ENCODE measurements at regions of chr2 and their contacts with region 1.

Region 1: GRCh38 chr2:205925373-205926337 is 160.3 kb downstream of the INO80D start:
- DNase-seq: peak; percentile 53 to 80
- ATAC-seq: peak; percentile 72 to 91 (median 80)
- H3K4me3 ChIP-seq: no peak overlapping the region
- H3K4me3 Mint-ChIP-seq: no peak overlapping the region
- H3K27ac ChIP-seq: no peak overlapping the region
- H3K27ac Mint-ChIP-seq: no peak overlapping the region
- H3K4me1 ChIP-seq: peaks cover 6% of the 10 kb centered on the region
- H3K4me1 Mint-ChIP-seq: peaks cover 8% of the 10 kb centered on the region in 2 donors
- H3K27me3 ChIP-seq: peaks cover 20% of the 10 kb centered on the region
- H3K27me3 Mint-ChIP-seq: peaks cover 29 to 61% of the 10 kb centered on the region in 2 donors
- CTCF ChIP-seq: peak; percentile 74

Region 2: DNA sequence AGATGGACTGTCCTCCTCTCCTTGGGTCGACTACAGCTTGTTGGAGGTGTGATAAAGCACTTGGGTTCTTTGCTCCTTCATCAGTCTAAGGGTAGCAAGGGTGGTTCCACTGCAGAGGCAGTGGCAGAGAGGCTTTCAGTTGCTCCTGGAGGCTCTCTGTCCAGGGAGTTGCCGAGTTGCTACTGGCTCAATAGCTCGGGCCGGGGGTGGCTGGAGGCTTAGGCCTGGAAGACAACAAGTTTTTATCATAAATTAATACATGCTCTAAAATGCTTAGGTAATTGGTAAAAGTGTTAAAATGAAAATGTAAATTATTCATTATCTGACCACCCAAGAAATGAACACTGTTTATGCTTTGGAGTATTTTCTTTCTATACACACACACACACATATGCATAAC is 405.3 kb before region 1 on chr2:
- intact Hi-C with region 1: no loop called
- DNase-seq: no peak
- ATAC-seq: no peak
- H3K4me3 ChIP-seq: no peak overlapping the region
- H3K4me3 Mint-ChIP-seq: no peak overlapping the region
- H3K27ac ChIP-seq: no peak overlapping the region
- H3K27ac Mint-ChIP-seq: no peak overlapping the region
- H3K4me1 ChIP-seq: no peaks in the 10 kb centered on the region
- H3K4me1 Mint-ChIP-seq: no peaks in the 10 kb centered on the region
- H3K27me3 ChIP-seq: no peaks in the 10 kb centered on the region
- H3K27me3 Mint-ChIP-seq: peaks cover 0 to 6% of the 10 kb centered on the region in 2 donors
- CTCF ChIP-seq: no peak

Region 3: GRCh38 chr2:205766779-205767359 is 158.8 kb before region 1 on chr2:
- intact Hi-C with region 1: loop called (anchors 5 kb)
- DNase-seq: peak in 1 of 2 donors; percentile 70
- ATAC-seq: peak in 1 of 3 donors; percentile 58
- H3K4me3 ChIP-seq: no peak overlapping the region
- H3K4me3 Mint-ChIP-seq: peak overlapping the region; percentile 28
- H3K27ac ChIP-seq: no peak overlapping the region
- H3K27ac Mint-ChIP-seq: no peak overlapping the region
- H3K4me1 ChIP-seq: no peaks in the 10 kb centered on the region
- H3K4me1 Mint-ChIP-seq: peaks cover 5% of the 10 kb centered on the region in 2 donors
- H3K27me3 ChIP-seq: peaks cover 5% of the 10 kb centered on the region
- H3K27me3 Mint-ChIP-seq: peaks cover 12 to 54% of the 10 kb centered on the region in 2 donors
- CTCF ChIP-seq: peak; percentile 85

Measured in natural killer cell (primary cell).